PC-3 (cell line): ENCODE measurements at regions of chr2 and their contacts with region 1.

Region 1: DNA sequence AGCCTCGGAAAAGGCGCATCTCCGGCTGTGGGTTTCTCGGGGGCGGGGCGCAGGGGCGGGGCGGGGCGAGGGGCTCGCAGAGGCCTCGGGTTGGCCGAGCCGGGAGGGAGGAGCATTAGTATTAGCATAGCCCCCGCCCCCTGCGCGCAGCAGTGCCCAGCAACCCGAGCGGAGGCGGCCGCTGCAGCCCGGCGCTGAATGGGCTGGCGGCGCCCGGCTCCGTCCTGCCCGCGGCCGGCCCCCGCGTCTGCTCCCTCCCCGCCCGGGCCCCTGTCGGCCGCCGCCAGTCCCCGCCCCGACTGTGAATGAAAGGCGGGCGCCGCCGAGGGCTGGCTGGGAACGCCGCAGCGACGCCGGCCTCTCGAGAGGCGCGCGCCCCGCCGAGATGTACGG is at the start of gene EFR3B:
- DNase-seq: peak; percentile 93
- ATAC-seq: peak; percentile 85
- H3K4me3 ChIP-seq: peak within 1 kb of the TSS; percentile 91
- H3K27ac ChIP-seq: no peak within 1 kb of the TSS
- H3K4me1 ChIP-seq: peaks cover 29% of the 10 kb centered on the region
- H3K27me3 ChIP-seq: no peaks in the 10 kb centered on the region
- CTCF ChIP-seq: no peak
- total RNA-seq, gene EFR3B: 4.6 and 7.9 TPM in 2 replicates

Region 2: GRCh38 chr2:24792874-24793760 is 248.8 kb before region 1 on chr2 and contains the starts of genes CENPO and PTRHD1:
- CTCF ChIA-PET with region 1: interaction called, 5 read pairs
- POLR2A ChIA-PET with region 1: no interaction called
- intact Hi-C with region 1: loop called (anchors 5 kb)
- DNase-seq: peak; percentile 96
- ATAC-seq: peak; percentile 86
- H3K4me3 ChIP-seq: peak within 1 kb of the TSS; percentile 76
- H3K27ac ChIP-seq: peak within 1 kb of the TSS; percentile 86
- H3K4me1 ChIP-seq: peaks cover 23% of the 10 kb centered on the region
- H3K27me3 ChIP-seq: no peaks in the 10 kb centered on the region
- CTCF ChIP-seq: peak; percentile 72
- total RNA-seq, gene CENPO: 41.4 and 68.5 TPM in 2 replicates
- total RNA-seq, gene PTRHD1: 35.8 and 68.6 TPM in 2 replicates

Region 3: DNA sequence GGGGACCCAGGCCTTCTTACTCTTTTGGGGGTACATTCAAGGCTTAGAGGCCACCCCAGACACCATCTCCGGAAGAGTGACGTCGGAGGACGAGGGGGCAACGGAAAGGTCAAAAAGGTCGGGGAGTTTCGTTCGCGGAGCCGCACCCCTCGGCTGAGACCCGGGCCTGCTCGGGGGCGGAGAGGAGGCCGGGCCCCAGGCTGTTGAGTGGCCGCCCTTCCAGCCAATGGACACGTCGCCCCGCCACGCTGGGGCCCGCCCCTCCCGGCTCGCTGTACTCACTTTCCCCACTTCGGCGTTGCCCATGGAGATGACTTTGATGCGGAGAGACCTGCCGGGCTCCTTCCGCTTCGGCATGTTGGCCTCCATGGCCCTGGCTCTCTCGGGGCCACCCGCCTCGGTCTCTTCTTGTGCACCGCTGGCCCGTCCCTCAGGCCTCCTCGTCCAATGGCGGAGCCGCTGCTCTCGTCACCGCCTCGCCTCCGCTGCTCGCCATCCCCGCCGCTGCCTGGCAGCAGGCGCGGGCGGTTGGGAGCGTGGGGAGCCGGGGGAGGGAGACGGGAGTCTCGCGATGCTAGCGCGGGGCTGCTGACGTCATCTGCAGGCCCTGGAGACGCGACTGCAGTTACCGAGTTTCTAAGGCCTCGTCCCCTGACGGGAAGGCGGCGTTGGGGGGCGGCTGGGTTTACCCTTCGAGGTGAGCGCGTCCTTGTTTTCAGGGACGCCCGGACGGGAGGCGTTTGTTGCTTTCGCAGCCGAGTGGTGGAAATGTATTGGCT is 70.2 kb before region 1 on chr2 and contains the start of gene DNAJC27:
- CTCF ChIA-PET with region 1: interaction called, 5 read pairs
- POLR2A ChIA-PET with region 1: no interaction called
- intact Hi-C with region 1: loop called (anchors 1 kb)
- DNase-seq: peak; percentile 98
- ATAC-seq: peak; percentile 92
- H3K4me3 ChIP-seq: peak within 1 kb of the TSS; percentile 97
- H3K27ac ChIP-seq: peak within 1 kb of the TSS; percentile 82
- H3K4me1 ChIP-seq: peaks cover 14% of the 10 kb centered on the region
- H3K27me3 ChIP-seq: no peaks in the 10 kb centered on the region
- CTCF ChIP-seq: no peak
- total RNA-seq, gene DNAJC27: 2.0 and 3.1 TPM in 2 replicates

Region 4: DNA sequence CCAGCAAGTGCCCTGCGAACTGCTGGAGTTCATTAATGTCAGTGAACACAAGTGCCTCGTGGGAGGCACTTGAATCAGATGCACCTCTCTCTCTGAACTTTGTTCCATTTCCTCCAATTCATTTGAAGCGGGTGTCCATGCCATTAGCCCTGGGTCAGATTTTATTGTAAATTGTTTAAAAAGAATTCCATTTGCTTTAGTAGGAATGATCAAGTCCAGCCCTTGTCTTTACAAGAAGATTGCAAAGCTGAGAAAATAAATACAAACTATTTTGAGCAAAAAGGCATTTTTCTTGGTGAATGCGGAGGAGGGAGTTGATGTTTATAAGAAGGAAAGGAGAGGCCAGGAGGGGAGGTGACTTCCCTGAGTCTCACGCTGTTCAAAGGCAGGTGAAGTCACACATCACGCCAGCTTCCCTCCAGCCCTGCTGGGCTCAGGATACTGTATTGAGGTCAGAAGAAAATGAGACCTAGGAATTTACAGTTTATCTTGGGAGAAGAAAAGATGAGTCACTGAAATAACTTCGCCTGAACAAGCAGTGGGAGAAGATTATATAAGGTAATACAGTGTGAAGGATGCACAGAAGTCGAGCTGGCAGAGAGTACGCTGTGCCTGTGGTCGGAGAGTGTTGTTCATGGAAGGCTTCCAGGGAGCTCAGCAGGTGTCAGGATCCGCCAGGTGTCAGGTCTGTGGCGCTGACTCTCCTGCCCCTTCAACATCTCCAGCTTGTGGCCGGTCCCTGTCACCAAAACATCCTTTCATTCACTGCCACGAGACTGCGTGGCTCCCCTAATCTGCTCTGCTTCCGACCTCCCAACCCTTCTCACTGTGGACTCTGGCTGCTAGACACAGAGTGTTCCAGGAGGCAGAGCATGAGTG is 36.5 kb after region 1 on chr2:
- CTCF ChIA-PET with region 1: no interaction called
- POLR2A ChIA-PET with region 1: interaction called, 3 read pairs
- intact Hi-C with region 1: loop called (anchors 1 kb)
- DNase-seq: peak; percentile 93
- ATAC-seq: peak; percentile 95
- H3K4me3 ChIP-seq: peak overlapping the region; percentile 46
- H3K27ac ChIP-seq: peak overlapping the region; percentile 62
- H3K4me1 ChIP-seq: peaks cover 16% of the 10 kb centered on the region
- H3K27me3 ChIP-seq: no peaks in the 10 kb centered on the region
- CTCF ChIP-seq: no peak

Region 5: GRCh38 chr2:25103287-25103871 is 61.5 kb after region 1 on chr2:
- CTCF ChIA-PET with region 1: no interaction called
- POLR2A ChIA-PET with region 1: no interaction called
- intact Hi-C with region 1: loop called (anchors 1 kb)
- DNase-seq: peak; percentile 94
- ATAC-seq: peak; percentile 68
- H3K4me3 ChIP-seq: no peak overlapping the region
- H3K27ac ChIP-seq: peak overlapping the region; percentile 74
- H3K4me1 ChIP-seq: peaks cover 40% of the 10 kb centered on the region
- H3K27me3 ChIP-seq: no peaks in the 10 kb centered on the region
- CTCF ChIP-seq: no peak

Region 6: DNA sequence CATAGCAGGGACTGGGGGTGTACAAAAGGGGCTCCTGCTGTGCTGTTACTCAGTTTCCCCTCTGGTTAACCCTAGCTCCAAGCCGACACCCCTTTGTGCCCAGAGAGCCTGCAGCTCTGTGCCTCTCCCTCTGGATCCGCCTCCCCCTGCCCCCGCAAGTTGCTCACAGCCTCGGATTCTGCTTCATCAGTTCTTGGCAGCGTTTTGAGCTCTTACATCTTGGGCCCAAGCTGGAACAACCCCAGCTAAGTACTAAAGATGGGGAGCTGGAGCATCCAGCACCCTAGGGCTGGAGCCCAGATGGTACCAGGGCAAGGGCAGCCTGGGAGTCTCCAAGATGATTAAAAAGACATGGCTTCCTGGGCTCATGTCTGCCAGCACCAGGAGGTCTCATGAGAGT is 85.7 kb after region 1 on chr2:
- CTCF ChIA-PET with region 1: interaction called, 9 read pairs
- POLR2A ChIA-PET with region 1: interaction called, 3 read pairs
- intact Hi-C with region 1: loop called (anchors 2 kb)
- DNase-seq: no peak
- ATAC-seq: no peak
- H3K4me3 ChIP-seq: no peak overlapping the region
- H3K27ac ChIP-seq: no peak overlapping the region
- H3K4me1 ChIP-seq: peaks cover 2% of the 10 kb centered on the region; the same call in 1 of the 2 replicates
- H3K27me3 ChIP-seq: no peaks in the 10 kb centered on the region
- CTCF ChIP-seq: no peak

Region 7: GRCh38 chr2:25251422-25252273 is 209.7 kb after region 1 on chr2:
- CTCF ChIA-PET with region 1: no interaction called
- POLR2A ChIA-PET with region 1: interaction called, 10 read pairs
- intact Hi-C with region 1: no loop called
- DNase-seq: peak; percentile 30
- ATAC-seq: peak; percentile 66
- H3K4me3 ChIP-seq: peak overlapping the region; percentile 70
- H3K27ac ChIP-seq: peak overlapping the region; percentile 16; the same call in 1 of the 2 replicates
- H3K4me1 ChIP-seq: peaks cover 11% of the 10 kb centered on the region; the same call in 1 of the 2 replicates
- H3K27me3 ChIP-seq: no peaks in the 10 kb centered on the region
- CTCF ChIP-seq: no peak